ENCODE measurements at regions of chrX and their contacts with region 1.

Region 1: GRCh38 chrX:13653022-13653693 is at the start of gene TCEANC:
- DNase-seq: peak; percentile 93 to 99
- H3K4me3 ChIP-seq: peak within 1 kb of the TSS; percentile 69 to 85
- H3K27ac ChIP-seq: peak within 1 kb of the TSS; percentile 96 to 97
- H3K4me1 ChIP-seq: no peaks in the 10 kb centered on the region
- H3K27me3 ChIP-seq: no peaks in the 10 kb centered on the region
- CTCF ChIP-seq: no peak
- total RNA-seq, gene TCEANC: 4.5 TPM

Region 2: GRCh38 chrX:13223868-13224555 is 429.1 kb before region 1 on chrX:
- intact Hi-C with region 1: no loop called
- DNase-seq: no peak
- H3K4me3 ChIP-seq: no peak overlapping the region
- H3K27ac ChIP-seq: peak overlapping the region in 1 of 2 donors; percentile 34
- H3K4me1 ChIP-seq: no peaks in the 10 kb centered on the region
- H3K27me3 ChIP-seq: no peaks in the 10 kb centered on the region
- CTCF ChIP-seq: no peak

Region 3: DNA sequence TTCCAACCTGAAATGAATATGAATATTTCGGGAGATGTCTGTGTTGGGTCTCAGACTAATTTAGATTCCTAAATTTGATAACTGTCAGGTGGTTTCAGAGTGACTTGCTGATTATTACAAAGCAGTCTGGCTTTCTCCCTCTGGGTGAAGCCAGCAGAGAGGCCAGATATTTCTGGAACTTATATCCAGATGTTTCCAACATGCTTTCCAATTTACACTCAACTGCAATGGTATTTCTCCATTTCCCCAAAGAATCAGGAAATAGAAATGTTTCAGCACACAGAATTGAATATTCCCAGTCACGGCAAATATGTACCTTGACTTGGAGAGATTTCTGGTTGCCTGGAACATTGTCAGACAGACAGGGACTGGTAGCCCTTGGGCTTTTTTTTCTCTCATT is 132.2 kb before region 1 on chrX:
- intact Hi-C with region 1: loop called (anchors 5 kb)
- DNase-seq: no peak
- H3K4me3 ChIP-seq: no peak overlapping the region
- H3K27ac ChIP-seq: peak overlapping the region; percentile 60 to 69
- H3K4me1 ChIP-seq: peaks cover 0 to 3% of the 10 kb centered on the region in 2 donors
- H3K27me3 ChIP-seq: no peaks in the 10 kb centered on the region
- CTCF ChIP-seq: no peak

Region 4: GRCh38 chrX:13627311-13627710 is 25.8 kb before region 1 on chrX:
- intact Hi-C with region 1: no loop called
- DNase-seq: no peak
- H3K4me3 ChIP-seq: no peak overlapping the region
- H3K27ac ChIP-seq: no peak overlapping the region
- H3K4me1 ChIP-seq: no peaks in the 10 kb centered on the region
- H3K27me3 ChIP-seq: no peaks in the 10 kb centered on the region
- CTCF ChIP-seq: no peak

Region 5: DNA sequence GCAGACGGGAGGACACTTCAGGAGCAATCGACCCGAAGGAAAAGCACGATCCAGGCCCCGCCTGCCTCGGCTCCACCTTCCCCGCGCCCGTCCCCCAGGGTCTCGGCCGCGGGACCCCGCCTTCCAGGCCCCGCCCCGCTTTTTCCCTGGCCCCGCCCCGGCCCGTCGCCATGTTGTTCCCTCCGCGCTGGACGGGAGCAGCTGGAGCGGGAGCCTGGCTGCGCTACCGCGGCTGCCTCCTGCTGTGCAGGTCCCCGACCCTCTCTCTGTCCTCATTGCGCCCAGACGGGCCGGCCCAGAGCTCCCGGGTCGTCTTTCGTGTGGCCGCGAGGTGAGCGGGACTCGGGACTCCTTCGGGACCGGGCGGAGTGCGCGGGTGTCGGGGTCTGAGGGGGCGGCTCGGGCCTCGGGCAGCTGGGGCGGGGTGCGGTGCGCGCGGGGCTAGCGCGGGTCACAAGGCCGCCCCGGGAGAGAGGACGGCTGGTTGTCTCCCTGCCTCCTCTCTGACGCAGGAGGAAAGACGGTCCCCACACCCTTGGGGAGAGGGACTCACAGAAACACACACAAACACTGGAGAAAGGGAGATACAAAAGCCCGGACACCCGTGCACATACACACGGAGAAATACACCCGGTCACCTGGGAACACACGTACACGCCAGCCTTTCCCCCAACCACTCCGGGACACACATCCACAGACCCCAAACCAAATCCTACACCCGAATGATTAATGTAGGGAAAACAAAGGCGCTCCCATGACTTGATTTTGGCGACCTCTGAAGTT is 36.0 kb after region 1 on chrX and contains the start of gene RAB9A:
- intact Hi-C with region 1: loop called (anchors 1 kb)
- DNase-seq: peak; percentile 52 to 92
- H3K4me3 ChIP-seq: peak within 1 kb of the TSS; percentile 80 to 91
- H3K27ac ChIP-seq: peak within 1 kb of the TSS; percentile 88 to 91
- H3K4me1 ChIP-seq: peaks cover 0 to 4% of the 10 kb centered on the region in 2 donors
- H3K27me3 ChIP-seq: no peaks in the 10 kb centered on the region
- CTCF ChIP-seq: no peak
- total RNA-seq, gene RAB9A: 1.5 TPM

Region 6: GRCh38 chrX:13734278-13735172 is 81.4 kb after region 1 on chrX and contains the starts of genes OFD1 and TRAPPC2:
- intact Hi-C with region 1: loop called (anchors 1 kb)
- DNase-seq: peak; percentile 82 to 98
- H3K4me3 ChIP-seq: peak within 1 kb of the TSS; percentile 70 to 80
- H3K27ac ChIP-seq: peak within 1 kb of the TSS; percentile 82 to 84
- H3K4me1 ChIP-seq: peaks cover 0 to 6% of the 10 kb centered on the region in 2 donors
- H3K27me3 ChIP-seq: no peaks in the 10 kb centered on the region
- CTCF ChIP-seq: no peak
- total RNA-seq, gene OFD1: 8.4 TPM
- total RNA-seq, gene TRAPPC2: 8.0 TPM

Region 7: GRCh38 chrX:13940671-13941070 is 287.5 kb after region 1 on chrX:
- intact Hi-C with region 1: no loop called
- DNase-seq: no peak
- H3K4me3 ChIP-seq: no peak overlapping the region
- H3K27ac ChIP-seq: no peak overlapping the region
- H3K4me1 ChIP-seq: no peaks in the 10 kb centered on the region
- H3K27me3 ChIP-seq: peaks cover 9% of the 10 kb centered on the region
- CTCF ChIP-seq: no peak